Right cardiac atrium (tissue), 5 donors: ENCODE measurements at regions of chr11 and their contacts with region 1.

Region 1: GRCh38 chr11:12893787-12894672 is 115.1 kb upstream of the RASSF10 start:
- DNase-seq: peak; percentile 43 to 79 (median 74)
- ATAC-seq: no peak
- H3K4me3 ChIP-seq: no peak overlapping the region
- H3K27ac ChIP-seq: no peak overlapping the region
- H3K4me1 ChIP-seq: peaks cover 9% of the 10 kb centered on the region
- H3K27me3 ChIP-seq: no peaks in the 10 kb centered on the region

Region 2: DNA sequence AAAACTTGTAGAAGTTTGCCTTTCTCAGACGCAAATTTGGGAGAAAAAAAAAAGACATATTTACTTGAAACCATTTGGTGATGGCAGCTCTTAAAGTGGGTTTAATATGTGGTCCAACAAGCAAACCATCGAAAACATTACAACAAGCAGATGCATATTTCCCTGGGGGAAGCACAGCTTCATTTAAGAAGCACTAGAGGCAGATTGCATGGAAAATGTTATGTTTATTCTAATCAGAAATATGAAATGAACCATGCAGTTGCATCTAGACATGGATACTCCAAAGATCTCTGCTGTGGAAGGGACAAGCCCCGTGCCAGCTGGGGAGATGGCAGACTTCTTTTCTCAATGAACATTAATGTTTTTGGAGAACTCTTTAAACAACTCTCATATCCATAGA is 574.0 kb before region 1 on chr11:
- intact Hi-C with region 1: loop called in 2 of 4 experiments (anchors 5 to 10 kb)
- DNase-seq: no peak
- ATAC-seq: no peak
- H3K4me3 ChIP-seq: no peak overlapping the region
- H3K27ac ChIP-seq: no peak overlapping the region
- H3K4me1 ChIP-seq: peaks cover 4% of the 10 kb centered on the region
- H3K27me3 ChIP-seq: no peaks in the 10 kb centered on the region

Region 3: DNA sequence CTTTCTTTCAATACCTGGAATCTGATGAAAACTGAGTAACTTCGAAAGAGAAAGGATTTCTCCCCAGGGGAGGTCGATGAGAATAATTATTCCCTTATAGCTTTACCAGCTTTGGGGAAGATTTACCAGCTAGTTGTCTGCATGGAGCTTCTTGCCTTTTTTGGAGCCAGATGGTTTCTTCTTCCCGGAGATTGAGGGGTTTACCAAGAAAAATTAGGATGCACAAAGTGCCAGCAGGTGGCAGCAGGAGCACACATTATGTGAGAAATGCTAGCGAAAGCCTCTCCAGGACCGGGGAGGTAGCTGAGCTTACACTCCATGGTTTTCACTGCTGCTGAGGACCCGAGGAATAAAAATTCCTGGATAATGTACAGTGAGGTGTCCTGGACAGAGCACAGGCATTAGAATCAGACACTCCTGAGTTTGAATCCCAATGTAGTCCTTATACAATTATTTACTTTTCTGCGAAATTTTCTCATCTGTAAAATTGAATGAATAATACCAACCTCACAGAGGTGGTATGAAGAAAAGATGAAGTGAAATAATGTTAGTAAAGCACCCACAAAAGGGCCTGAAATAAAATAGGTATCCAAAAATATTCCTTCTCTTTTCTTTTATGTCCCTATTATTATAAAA is 562.7 kb before region 1 on chr11:
- intact Hi-C with region 1: loop called (anchors 5 to 10 kb)
- DNase-seq: peak; percentile 86 to 93 (median 90)
- ATAC-seq: peak; percentile 65 to 83
- H3K4me3 ChIP-seq: no peak overlapping the region
- H3K27ac ChIP-seq: no peak overlapping the region
- H3K4me1 ChIP-seq: no peaks in the 10 kb centered on the region
- H3K27me3 ChIP-seq: no peaks in the 10 kb centered on the region

Region 4: GRCh38 chr11:12411806-12412727 is 482.0 kb before region 1 on chr11:
- intact Hi-C with region 1: loop called in 3 of 4 experiments (anchors 5 to 10 kb)
- DNase-seq: peak; percentile 70 to 83 (median 78)
- ATAC-seq: peak; percentile 78 to 86
- H3K4me3 ChIP-seq: no peak overlapping the region
- H3K27ac ChIP-seq: peak overlapping the region; percentile 28
- H3K4me1 ChIP-seq: peaks cover 25% of the 10 kb centered on the region
- H3K27me3 ChIP-seq: no peaks in the 10 kb centered on the region

Region 5: GRCh38 chr11:12599408-12600143 is 294.5 kb before region 1 on chr11:
- intact Hi-C with region 1: loop called in 2 of 4 experiments (anchors 10 kb)
- DNase-seq: peak; percentile 41 to 81 (median 80)
- ATAC-seq: peak; percentile 47 to 66
- H3K4me3 ChIP-seq: no peak overlapping the region
- H3K27ac ChIP-seq: no peak overlapping the region
- H3K4me1 ChIP-seq: peaks cover 2% of the 10 kb centered on the region
- H3K27me3 ChIP-seq: no peaks in the 10 kb centered on the region

Region 6: GRCh38 chr11:12673924-12674570 is 220.0 kb before region 1 on chr11 and contains the start of gene TEAD1:
- intact Hi-C with region 1: loop called (anchors 5 to 10 kb)
- DNase-seq: peak; percentile 96 to 99 (median 98)
- ATAC-seq: peak; percentile 98
- H3K4me3 ChIP-seq: peak within 1 kb of the TSS; percentile 92
- H3K27ac ChIP-seq: peak within 1 kb of the TSS; percentile 93
- H3K4me1 ChIP-seq: no peaks in the 10 kb centered on the region
- H3K27me3 ChIP-seq: no peaks in the 10 kb centered on the region
- total RNA-seq, gene TEAD1: 81.3 to 105 (median 98.4) TPM